Activated T-helper 1 cell treated with anti-CD3 and anti-CD28 coated beads, Interleukin-12 subunit alpha, Interleukin-12 subunit beta, Interleukin-2, Interleukin-4 antibody, amounts not matched to agents 30 ng/mL and 10 ng/mL and 1 ng/mL, durations not matched to agents 14 hours and 24 hours and 36 hours (primary cell): ENCODE measurements at regions of chr15 and their contacts with region 1.

Region 1: DNA sequence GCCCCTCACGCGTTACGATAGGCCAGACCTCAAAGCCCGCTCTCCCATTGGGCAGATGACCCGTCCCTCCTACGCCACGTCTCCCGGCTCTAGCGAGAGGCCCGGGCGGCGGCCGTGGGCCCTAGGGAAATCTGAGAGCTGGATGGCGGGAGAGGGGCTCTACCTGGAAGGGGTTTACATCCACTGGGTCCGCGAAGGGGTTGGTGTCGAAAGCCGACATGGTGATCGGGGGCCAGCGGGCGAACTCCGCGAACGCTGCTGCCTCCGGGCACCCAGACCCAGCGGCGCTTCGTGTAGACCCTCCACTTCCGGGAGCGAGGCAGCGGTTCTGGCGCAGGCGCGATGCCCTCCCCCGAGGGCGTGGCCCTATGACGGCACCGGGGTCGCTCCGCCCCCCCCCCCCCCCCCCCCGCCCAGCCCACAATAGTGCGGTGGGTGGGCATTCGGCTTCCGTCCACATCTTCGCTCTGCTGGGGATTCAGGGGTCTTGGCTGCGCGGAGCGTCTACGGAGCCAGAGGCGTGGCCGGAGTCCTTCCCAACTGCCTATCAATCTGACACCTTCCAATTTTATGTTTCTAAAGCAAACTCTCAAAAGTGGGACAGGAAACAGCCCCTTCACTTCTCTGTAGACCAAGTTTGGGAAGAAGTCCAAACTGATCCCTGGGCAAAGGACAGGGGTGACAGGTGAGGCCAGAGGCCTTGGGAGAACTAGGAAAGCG is at the start of gene SCAMP2:
- DNase-seq: peak; percentile 86
- H3K4me3 Mint-ChIP-seq: peak within 1 kb of the TSS; percentile 97
- H3K27ac Mint-ChIP-seq: peak within 1 kb of the TSS; percentile 86
- H3K4me1 Mint-ChIP-seq: peaks cover 34% of the 10 kb centered on the region
- H3K27me3 Mint-ChIP-seq: peaks cover 4% of the 10 kb centered on the region
- total RNA-seq, gene SCAMP2: 93.7 and 103 TPM in 2 replicates

Region 2: DNA sequence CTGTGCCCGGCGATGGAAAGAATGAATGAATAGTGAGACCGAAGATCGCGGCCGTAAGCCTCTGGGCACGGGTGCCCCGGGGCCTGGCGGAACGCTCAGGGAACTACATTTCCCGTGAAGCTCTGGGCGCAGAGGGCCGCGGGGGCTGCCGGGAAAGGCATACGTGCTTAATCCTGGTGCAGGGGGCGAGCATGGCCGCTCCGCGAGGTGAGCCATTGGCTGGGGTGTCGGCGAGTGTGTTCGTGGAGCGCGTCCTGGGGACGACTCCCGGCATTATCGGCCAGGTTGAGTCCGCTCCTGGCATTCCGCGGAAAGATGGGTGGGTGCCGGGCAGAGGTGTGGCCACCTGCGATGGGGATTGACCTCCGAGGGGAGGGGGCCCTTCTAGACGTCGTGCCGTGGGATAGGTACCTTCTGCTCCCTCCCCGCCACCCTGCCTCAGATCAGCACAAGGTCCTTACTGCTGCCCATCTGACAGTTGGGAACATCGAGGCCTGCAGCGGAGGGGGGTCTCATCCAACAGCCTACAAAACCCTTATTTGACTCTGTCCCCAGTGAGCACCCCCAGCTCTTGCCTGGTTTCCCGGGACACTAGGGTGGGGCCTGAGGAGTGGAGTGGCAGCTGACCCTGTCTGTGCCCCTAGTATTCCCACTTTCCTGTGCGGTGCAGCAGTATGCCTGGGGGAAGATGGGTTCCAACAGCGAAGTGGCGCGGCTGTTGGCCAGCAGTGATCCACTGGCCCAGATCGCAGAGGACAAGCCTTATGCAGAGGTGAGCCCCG is 16.9 kb after region 1 on chr15 and contains the start of gene MPI:
- intact Hi-C with region 1: loop called (anchors 1 kb)
- DNase-seq: peak; percentile 82
- H3K4me3 Mint-ChIP-seq: peak within 1 kb of the TSS; percentile 91
- H3K27ac Mint-ChIP-seq: peak within 1 kb of the TSS; percentile 92
- H3K4me1 Mint-ChIP-seq: peaks cover 47% of the 10 kb centered on the region
- H3K27me3 Mint-ChIP-seq: no peaks in the 10 kb centered on the region
- total RNA-seq, gene MPI: 57.7 and 62.8 TPM in 2 replicates